ENCODE measurements at regions of chr1 and their contacts with region 1.

Region 1: DNA sequence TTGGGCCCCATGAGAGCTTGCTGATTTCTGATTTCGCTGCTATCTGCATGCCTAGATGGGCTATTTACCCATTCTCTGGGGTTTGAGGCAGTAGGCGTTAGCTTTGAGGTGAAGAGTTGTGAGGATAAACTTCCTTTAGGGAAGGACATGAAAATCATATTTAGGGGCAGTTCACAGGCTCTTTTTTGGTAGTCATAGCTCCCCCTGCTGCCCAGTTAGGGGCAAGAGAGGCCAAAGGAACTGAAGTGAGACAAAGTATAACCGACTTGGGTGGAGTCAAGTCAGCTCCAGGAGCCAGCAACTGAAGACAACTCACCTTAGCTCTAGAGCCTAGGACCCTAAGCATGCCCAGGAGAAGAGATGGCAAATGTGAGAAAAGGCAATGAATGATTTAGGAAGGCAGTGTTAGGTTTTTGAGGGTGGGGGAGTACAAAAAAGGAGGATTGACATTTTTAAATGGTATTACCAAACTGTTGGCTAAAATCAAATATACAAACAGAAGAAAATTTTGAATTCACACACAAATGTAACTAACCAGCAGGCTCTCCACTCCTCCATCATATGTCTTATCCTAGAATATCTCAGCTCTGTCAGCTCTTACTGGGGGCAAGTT is 625.2 kb downstream of the LMO4 start:
- DNase-seq: peak; percentile 32
- CTCF ChIP-seq: peak; percentile 73

Region 2: DNA sequence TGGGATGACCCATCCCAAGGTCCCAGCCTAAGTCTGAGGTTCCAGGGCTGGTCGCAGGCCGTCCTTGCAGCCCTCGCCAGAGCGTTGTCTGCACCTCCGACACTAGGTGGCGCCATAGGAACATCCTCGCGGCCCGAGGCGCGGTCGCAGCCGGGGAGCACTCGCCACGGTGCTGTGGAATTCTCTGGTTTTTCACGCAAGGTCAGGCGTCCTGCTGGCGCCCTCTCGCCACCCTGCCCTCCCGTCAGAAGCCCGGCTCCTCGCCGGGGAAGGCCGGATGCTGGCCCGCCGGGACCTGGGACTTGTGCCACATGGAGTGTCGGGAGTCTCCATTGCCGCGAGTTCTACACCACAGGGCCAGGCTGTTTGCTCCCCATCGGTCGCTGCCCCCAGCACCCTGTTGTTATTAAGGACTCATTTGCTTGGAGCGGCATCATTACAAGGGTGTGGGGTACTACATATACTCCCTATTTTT is 822.0 kb before region 1 on chr1:
- CTCF ChIA-PET with region 1: interaction called, 10 read pairs
- POLR2A ChIA-PET with region 1: no interaction called
- DNase-seq: peak; percentile 87
- CTCF ChIP-seq: peak; percentile 96

Region 3: GRCh38 chr1:87243573-87243972 is 710.3 kb before region 1 on chr1:
- CTCF ChIA-PET with region 1: no interaction called
- POLR2A ChIA-PET with region 1: no interaction called
- DNase-seq: no peak
- CTCF ChIP-seq: no peak

Region 4: DNA sequence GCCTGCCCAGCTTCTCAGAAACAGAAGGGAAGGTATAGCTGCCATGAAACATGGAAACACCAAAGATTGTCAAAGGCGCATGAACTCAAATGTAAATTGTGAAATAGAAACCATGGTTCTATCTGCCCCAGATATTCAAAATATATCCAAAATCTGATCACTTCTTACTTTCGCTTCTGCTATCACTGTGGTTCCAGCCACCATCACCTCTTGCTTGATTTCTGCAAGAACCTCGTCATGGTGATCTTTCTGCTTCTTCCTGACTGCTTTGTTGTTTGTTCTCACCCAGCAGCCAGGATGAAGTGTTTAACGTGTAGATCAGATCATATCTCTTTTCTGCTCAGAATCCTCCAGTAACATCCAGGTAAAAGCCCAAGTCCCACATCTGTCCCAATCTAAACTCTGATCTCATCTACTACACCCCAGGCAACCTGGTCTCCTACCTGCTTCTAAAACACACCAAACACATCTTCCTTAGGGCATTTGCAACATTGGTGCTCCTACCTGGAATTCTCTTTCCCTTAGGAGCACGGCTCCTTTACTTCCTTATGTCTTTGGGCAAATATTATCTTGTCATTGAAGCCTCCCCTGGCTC is 635.7 kb before region 1 on chr1:
- CTCF ChIA-PET with region 1: interaction called, 10 read pairs
- POLR2A ChIA-PET with region 1: no interaction called
- DNase-seq: no peak
- CTCF ChIP-seq: no peak

Region 5: DNA sequence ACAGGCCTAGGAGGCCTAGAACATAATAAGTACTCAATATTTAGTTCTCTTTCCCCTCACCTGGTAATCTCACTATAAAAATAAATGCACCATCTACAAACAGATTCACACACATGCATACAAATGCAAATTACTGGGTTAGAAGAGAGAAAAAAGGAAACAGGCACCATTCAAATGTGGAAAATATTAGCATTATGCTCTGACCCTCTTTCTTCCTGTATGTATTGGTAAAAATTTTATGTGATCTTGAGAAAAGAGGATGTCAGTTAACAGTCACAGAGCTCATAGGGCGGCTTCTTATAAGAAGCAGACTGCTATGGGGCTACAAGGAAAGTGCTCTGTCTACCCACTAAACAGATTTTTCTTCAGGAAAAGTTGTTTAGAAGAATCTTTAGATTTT is 59.8 kb before region 1 on chr1:
- CTCF ChIA-PET with region 1: interaction called, 11 read pairs
- POLR2A ChIA-PET with region 1: no interaction called
- DNase-seq: no peak
- CTCF ChIP-seq: no peak

Region 6: GRCh38 chr1:87942165-87942564 is 11.7 kb before region 1 on chr1:
- CTCF ChIA-PET with region 1: interaction called, 27 read pairs
- POLR2A ChIA-PET with region 1: no interaction called
- DNase-seq: no peak
- CTCF ChIP-seq: no peak

Region 7: GRCh38 chr1:88061492-88062177 is 107.8 kb after region 1 on chr1:
- CTCF ChIA-PET with region 1: no interaction called
- POLR2A ChIA-PET with region 1: no interaction called
- DNase-seq: peak; percentile 14
- CTCF ChIP-seq: peak; percentile 55

Measured in GM10248 (cell line).